ENCODE measurements at regions of chr9 and their contacts with region 1.

Region 1: GRCh38 chr9:86741311-86742208 is 205.7 kb downstream of the GAS1 start:
- DNase-seq: peak; percentile 90 to 100
- H3K4me3 ChIP-seq: no peak overlapping the region
- H3K27ac ChIP-seq: peak overlapping the region; percentile 85
- H3K4me1 ChIP-seq: peaks cover 37% of the 10 kb centered on the region
- H3K27me3 ChIP-seq: no peaks in the 10 kb centered on the region
- CTCF ChIP-seq: peak; percentile 30; the same call in 1 of the 2 replicates

Region 2: DNA sequence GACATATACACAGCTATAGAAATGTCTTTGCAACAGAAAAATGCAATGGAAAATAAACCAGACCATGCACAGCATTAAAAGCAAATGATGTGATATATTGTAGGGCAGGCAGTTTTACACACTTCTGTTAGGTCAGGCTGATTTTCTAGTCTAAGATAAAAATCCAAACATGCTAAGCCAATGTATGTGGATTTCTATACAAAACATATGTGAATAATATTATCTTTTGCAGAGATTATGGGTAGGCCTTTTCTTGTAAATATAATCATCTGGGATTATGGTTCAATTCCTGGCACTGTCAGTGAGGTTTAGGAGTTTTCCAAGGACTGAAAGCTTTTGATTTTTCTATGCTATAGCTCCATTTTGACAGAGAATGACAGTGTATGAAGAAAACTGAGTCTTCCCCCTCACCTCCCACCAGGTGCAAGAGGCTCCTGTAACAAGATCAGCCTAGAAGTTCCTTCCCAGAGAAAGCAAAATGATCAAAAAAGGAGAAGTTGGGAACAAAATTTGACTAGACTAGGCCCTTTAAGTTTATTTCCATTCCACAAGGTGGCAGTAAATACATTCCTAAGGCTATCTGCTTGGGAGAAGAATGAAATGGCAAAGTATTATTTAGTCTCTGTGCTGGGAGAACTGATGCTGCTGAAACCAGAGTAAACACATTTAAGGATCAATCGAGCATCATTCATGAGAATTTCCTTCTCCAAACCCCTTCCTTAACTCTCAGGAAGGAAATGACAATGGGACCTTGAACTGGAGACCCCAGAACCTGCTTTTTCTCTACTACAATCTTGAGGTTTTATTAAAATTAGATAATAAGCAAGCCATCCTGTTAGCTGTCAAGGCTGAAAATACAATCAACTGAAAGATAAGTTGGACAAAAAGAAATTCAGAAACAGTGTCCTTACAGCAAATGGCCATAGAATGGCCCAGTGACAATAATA is 254.4 kb before region 1 on chr9:
- CTCF ChIA-PET with region 1: no interaction called
- POLR2A ChIA-PET with region 1: no interaction called
- intact Hi-C with region 1: loop called (anchors 1 kb)
- DNase-seq: peak in 1 of 2 experiments; percentile 54
- H3K4me3 ChIP-seq: no peak overlapping the region
- H3K27ac ChIP-seq: no peak overlapping the region
- H3K4me1 ChIP-seq: 0 out of 2 replicates have a peak, but pooled peaks cover 6% of the 10 kb centered on the region
- H3K27me3 ChIP-seq: no peaks in the 10 kb centered on the region
- CTCF ChIP-seq: peak; percentile 85

Region 3: DNA sequence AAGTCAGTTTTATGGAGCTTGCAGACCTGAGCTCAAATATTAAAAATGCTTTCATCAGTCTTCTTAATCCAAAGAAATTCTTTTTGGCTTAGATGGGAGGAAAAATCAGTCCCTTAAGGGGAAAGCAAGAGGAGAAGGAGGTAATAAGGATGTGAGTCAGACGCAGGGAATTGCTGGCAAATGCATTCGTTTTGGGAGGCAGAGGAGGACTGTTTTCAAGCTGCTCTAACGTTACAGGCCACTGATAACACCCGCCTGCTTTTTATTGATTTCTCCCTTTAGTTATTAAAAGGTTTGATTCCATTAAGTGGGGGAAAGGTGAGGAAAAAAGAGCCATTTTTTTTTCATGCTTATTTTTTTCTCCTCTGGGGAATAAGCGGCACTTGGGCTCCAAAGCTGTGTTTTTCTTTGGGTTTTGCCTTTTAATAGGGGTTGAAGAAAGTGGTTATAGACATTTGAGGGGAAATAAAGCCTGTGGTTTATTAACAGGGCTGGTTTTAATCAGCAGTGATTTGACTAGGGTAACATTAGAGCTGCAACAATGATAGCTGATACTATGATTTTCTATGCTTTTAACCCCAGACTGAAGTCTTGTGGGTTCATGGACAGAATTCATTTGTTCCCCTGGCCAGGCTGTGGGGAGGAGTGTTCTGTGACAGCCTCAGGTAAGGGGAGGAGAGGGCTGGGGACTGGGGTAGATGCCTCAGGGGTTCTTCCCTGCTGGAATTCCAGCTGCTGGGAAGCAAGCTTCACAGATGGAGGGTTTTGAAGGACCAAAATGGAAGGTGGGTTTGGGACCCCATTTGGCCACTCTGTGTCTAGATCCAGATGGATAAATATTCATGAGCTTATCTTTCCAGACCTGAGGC is 19.5 kb before region 1 on chr9:
- CTCF ChIA-PET with region 1: interaction called, 3 read pairs
- POLR2A ChIA-PET with region 1: interaction called, 4 read pairs
- intact Hi-C with region 1: loop called (anchors 1 kb)
- DNase-seq: peak; percentile 31 to 87
- H3K4me3 ChIP-seq: peak overlapping the region; percentile 41; the same call in 1 of the 2 replicates
- H3K27ac ChIP-seq: peak overlapping the region; percentile 96
- H3K4me1 ChIP-seq: peaks cover 43% of the 10 kb centered on the region
- H3K27me3 ChIP-seq: no peaks in the 10 kb centered on the region
- CTCF ChIP-seq: no peak

Region 4: GRCh38 chr9:86766912-86767311 is 25.4 kb after region 1 on chr9:
- CTCF ChIA-PET with region 1: no interaction called
- POLR2A ChIA-PET with region 1: no interaction called
- intact Hi-C with region 1: loop called (anchors 1 kb)
- DNase-seq: peak; percentile 76 to 95
- H3K4me3 ChIP-seq: no peak overlapping the region; the same call in 1 of the 2 replicates
- H3K27ac ChIP-seq: peak overlapping the region; percentile 82
- H3K4me1 ChIP-seq: peaks cover 25% of the 10 kb centered on the region
- H3K27me3 ChIP-seq: no peaks in the 10 kb centered on the region
- CTCF ChIP-seq: no peak

Region 5: GRCh38 chr9:86854898-86855523 is 113.5 kb after region 1 on chr9:
- CTCF ChIA-PET with region 1: no interaction called
- POLR2A ChIA-PET with region 1: no interaction called
- intact Hi-C with region 1: no loop called
- DNase-seq: peak; percentile 8 to 74
- H3K4me3 ChIP-seq: no peak overlapping the region
- H3K27ac ChIP-seq: no peak overlapping the region
- H3K4me1 ChIP-seq: 0 out of 2 replicates have a peak, but pooled peaks cover 4% of the 10 kb centered on the region
- H3K27me3 ChIP-seq: no peaks in the 10 kb centered on the region
- CTCF ChIP-seq: no peak

Region 6: DNA sequence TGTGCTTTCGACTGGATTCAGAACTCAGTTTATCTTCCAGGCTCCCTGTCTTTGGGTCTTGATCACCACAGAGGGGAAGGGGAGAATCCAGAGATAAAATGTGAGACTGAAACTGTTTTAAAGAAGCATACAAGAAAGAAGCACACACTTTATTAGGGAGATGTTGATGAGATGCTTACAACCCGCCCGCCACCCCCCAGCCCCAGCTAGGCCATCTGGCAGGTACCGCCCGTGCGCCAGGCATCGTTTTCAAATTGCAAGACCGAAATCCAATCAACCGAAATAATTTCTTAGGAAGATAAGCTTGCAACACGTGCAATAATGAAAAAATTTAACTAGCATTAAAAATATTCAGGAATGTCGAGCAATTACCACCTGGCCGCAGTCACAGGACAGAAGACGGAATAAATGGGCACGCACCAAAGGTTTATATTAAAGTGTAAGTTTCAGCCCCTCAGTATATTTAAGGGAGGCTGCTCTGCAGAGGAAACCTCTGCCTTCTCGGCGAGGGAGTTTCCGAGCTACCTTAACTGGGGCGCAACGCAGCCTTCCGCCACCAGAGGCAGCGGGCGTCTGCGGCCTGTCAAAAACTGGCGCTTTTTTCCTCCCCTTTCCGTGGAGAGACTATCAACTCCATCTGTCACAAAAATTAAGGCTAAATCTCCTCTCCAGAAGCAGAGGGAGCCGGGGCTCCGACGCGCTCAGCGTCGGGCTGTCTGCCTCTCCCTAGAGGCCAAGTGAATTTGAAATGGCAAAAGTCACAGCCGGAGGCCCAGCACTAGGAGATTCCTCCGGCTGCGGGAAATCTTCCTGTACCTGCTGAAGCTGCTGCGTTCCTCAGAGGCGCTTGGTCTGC is 206.7 kb after region 1 on chr9:
- CTCF ChIA-PET with region 1: no interaction called
- POLR2A ChIA-PET with region 1: no interaction called
- intact Hi-C with region 1: loop called (anchors 5 kb)
- DNase-seq: peak; percentile 57
- H3K4me3 ChIP-seq: peak overlapping the region; percentile 63
- H3K27ac ChIP-seq: no peak overlapping the region
- H3K4me1 ChIP-seq: 0 out of 2 replicates have a peak, but pooled peaks cover 4% of the 10 kb centered on the region
- H3K27me3 ChIP-seq: no peaks in the 10 kb centered on the region
- CTCF ChIP-seq: peak; percentile 77

Region 7: GRCh38 chr9:87324613-87325194 is 583.1 kb after region 1 on chr9:
- CTCF ChIA-PET with region 1: no interaction called
- POLR2A ChIA-PET with region 1: no interaction called
- intact Hi-C with region 1: loop called (anchors 10 kb)
- DNase-seq: peak; percentile 3 to 43
- H3K4me3 ChIP-seq: no peak overlapping the region
- H3K27ac ChIP-seq: no peak overlapping the region
- H3K4me1 ChIP-seq: peaks cover 10% of the 10 kb centered on the region; the same call in 1 of the 2 replicates
- H3K27me3 ChIP-seq: no peaks in the 10 kb centered on the region
- CTCF ChIP-seq: peak; percentile 95

Measured in PC-9 (cell line).